Colonic mucosa (tissue), 4 donors: ENCODE measurements at regions of chr10 and their contacts with region 1.

Region 1: DNA sequence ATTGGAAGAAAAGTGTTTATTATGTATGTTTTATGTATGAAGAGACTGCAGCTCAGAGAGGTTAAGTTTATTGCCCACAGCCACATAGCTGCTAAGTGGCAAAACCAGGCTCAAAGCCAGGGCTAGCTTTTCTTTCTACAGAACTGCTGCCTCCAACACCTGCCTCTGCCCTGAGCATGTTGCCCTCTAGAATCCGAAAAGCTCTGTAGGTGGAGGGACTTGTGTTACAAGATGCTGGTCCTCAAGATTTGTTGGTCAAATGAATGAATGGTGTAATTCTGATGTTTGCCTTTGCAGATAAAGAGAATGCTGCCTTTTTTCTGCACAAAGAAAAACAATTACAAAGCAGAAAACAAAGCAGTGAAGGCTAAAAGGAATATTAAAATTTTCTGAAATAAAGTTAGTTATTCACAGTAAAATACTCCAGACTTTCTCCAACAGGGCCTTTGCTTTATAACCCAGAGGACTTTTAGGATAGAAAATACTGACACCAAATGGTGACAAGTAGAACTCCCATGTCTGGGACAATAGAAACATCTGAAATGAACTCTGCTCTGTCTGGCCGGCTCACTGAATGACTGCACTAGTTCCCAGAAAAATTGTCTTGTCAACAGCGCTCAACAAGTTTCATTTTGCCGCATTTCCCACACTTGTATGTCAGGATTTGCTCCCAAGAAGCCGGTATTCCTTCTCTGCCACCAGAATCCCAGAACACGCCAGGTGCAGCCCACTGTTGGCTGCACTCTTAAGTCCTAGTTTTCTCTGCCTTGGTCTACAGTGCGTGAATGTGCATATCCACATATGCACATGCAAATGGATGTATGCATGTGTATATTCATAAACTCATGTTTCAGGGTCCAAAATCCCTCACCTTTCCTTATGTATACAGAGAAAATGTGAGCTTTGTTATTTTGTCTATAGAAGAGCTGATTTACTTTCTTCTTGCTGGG is 11.0 kb upstream of the DNTT start:
- DNase-seq: peak; percentile 43
- H3K4me3 ChIP-seq: no peak overlapping the region
- H3K27ac ChIP-seq: no peak overlapping the region
- H3K4me1 ChIP-seq: no peaks in the 10 kb centered on the region
- H3K27me3 ChIP-seq: no peaks in the 10 kb centered on the region
- CTCF ChIP-seq: peak; percentile 57

Region 2: GRCh38 chr10:95814011-95814727 is 479.1 kb before region 1 on chr10:
- intact Hi-C with region 1: no loop called
- DNase-seq: peak; percentile 22
- H3K4me3 ChIP-seq: no peak overlapping the region
- H3K27ac ChIP-seq: peak overlapping the region; percentile 15
- H3K4me1 ChIP-seq: no peaks in the 10 kb centered on the region
- H3K27me3 ChIP-seq: no peaks in the 10 kb centered on the region
- CTCF ChIP-seq: no peak

Region 3: DNA sequence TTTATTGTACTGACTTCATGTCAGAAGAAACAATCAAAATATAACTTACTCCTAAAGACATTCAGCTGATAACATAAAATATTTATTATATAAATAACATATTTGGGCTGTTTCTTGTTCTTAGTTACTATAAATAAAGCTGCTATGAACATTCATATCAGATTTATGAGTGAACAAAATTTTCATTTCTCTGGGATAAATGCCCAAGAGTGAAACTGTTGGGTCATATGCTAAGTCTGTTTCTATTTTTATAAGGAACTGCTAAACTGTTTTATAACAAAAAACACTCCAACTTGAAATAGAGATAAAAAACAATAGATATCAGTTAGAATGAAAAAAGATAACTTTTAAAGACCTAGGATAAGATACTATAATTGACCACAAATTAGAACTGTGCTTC is 411.9 kb before region 1 on chr10:
- intact Hi-C with region 1: no loop called
- DNase-seq: no peak
- H3K4me3 ChIP-seq: no peak overlapping the region
- H3K27ac ChIP-seq: no peak overlapping the region
- H3K4me1 ChIP-seq: no peaks in the 10 kb centered on the region
- H3K27me3 ChIP-seq: no peaks in the 10 kb centered on the region
- CTCF ChIP-seq: no peak

Region 4: GRCh38 chr10:96229568-96230030 is 63.6 kb before region 1 on chr10:
- intact Hi-C with region 1: loop called (anchors 2 kb)
- DNase-seq: peak; percentile 89
- H3K4me3 ChIP-seq: no peak overlapping the region
- H3K27ac ChIP-seq: peak overlapping the region; percentile 29
- H3K4me1 ChIP-seq: no peaks in the 10 kb centered on the region
- H3K27me3 ChIP-seq: no peaks in the 10 kb centered on the region
- CTCF ChIP-seq: peak; percentile 52